Activated CD4-positive, alpha-beta T cell treated with anti-CD3 and anti-CD28 coated beads, Interleukin-2, amount 10 ng/mL, durations not matched to agents 24 days and 14 days (primary cell): ENCODE measurements at regions of chr3 and their contacts with region 1.

Region 1: DNA sequence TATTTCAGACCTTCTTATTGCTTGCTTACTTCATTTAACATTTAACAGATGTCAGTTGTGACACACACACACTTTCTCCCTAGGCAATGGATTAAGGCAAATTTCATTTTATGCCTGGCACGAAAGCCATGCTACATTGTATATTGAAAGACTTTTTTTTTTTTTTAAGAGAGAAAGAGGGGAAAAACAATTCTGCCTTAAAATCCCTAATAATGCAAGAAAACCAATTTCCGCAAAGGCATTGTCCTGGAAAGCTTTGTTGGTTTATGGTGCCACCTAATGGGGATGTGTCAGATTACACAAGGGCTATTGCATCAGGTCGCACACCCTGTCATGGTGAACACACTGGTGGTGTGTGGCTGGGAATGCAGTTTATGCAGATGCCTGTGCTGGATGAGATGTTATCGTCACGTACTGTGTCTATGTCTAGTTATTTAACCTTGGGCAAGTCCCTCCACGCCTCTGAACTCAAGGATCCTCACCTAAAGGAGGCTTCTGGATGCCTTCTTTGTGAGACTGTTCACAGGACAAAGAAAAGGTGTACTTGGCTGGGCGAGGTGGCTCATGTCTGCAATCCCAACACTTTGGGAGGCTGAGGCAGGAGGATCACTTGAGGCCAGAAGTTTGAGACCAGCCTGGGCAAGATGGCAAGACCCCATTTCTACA is 37.3 kb upstream of the RFTN1 start:
- DNase-seq: peak; percentile 94
- H3K4me3 Mint-ChIP-seq: no peak overlapping the region
- H3K27ac Mint-ChIP-seq: peak overlapping the region; percentile 71
- H3K4me1 Mint-ChIP-seq: peaks cover 11% of the 10 kb centered on the region
- H3K27me3 Mint-ChIP-seq: peaks cover 13% of the 10 kb centered on the region

Region 2: GRCh38 chr3:15309662-15310335 is 1241.0 kb before region 1 on chr3:
- intact Hi-C with region 1: no loop called
- DNase-seq: no peak
- H3K4me3 Mint-ChIP-seq: peak overlapping the region; percentile 72
- H3K27ac Mint-ChIP-seq: peak overlapping the region; percentile 94
- H3K4me1 Mint-ChIP-seq: peaks cover 54% of the 10 kb centered on the region
- H3K27me3 Mint-ChIP-seq: no peaks in the 10 kb centered on the region

Region 3: GRCh38 chr3:15815696-15816095 is 735.1 kb before region 1 on chr3:
- intact Hi-C with region 1: loop called (anchors 2 kb)
- DNase-seq: no peak
- H3K4me3 Mint-ChIP-seq: no peak overlapping the region
- H3K27ac Mint-ChIP-seq: no peak overlapping the region
- H3K4me1 Mint-ChIP-seq: peaks cover 23% of the 10 kb centered on the region
- H3K27me3 Mint-ChIP-seq: no peaks in the 10 kb centered on the region

Region 4: GRCh38 chr3:16048435-16049318 is 502.1 kb before region 1 on chr3:
- intact Hi-C with region 1: loop called (anchors 1 kb)
- DNase-seq: peak; percentile 83
- H3K4me3 Mint-ChIP-seq: peak overlapping the region; percentile 17
- H3K27ac Mint-ChIP-seq: no peak overlapping the region
- H3K4me1 Mint-ChIP-seq: peaks cover 4% of the 10 kb centered on the region
- H3K27me3 Mint-ChIP-seq: peaks cover 4% of the 10 kb centered on the region

Region 5: DNA sequence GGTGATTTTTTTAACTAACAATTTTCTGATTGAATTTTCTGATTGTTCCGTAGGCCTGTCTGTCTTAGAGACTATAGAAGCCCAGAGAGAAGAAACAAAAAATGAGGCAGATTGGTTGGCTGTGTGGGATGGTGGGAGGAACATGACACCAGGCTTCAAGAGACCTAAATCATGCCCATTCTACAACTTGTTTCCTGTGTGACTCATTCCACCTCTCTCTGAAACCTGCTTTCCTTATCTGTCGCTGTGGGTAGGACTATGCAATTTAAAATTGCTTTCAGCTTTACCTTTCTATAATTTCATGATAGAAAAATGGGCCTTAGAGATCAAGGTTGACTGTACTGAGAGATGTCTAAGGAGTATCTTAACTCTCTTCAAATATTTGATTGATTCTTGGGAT is 241.3 kb before region 1 on chr3:
- intact Hi-C with region 1: loop called (anchors 2 kb)
- DNase-seq: peak; percentile 87
- H3K4me3 Mint-ChIP-seq: peak overlapping the region; percentile 61
- H3K27ac Mint-ChIP-seq: peak overlapping the region; percentile 89
- H3K4me1 Mint-ChIP-seq: peaks cover 80% of the 10 kb centered on the region
- H3K27me3 Mint-ChIP-seq: no peaks in the 10 kb centered on the region

Region 6: GRCh38 chr3:16319307-16319706 is 231.5 kb before region 1 on chr3:
- intact Hi-C with region 1: loop called (anchors 1 kb)
- DNase-seq: peak; percentile 94
- H3K4me3 Mint-ChIP-seq: peak overlapping the region; percentile 35
- H3K27ac Mint-ChIP-seq: peak overlapping the region; percentile 80
- H3K4me1 Mint-ChIP-seq: peaks cover 61% of the 10 kb centered on the region
- H3K27me3 Mint-ChIP-seq: no peaks in the 10 kb centered on the region

Region 7: DNA sequence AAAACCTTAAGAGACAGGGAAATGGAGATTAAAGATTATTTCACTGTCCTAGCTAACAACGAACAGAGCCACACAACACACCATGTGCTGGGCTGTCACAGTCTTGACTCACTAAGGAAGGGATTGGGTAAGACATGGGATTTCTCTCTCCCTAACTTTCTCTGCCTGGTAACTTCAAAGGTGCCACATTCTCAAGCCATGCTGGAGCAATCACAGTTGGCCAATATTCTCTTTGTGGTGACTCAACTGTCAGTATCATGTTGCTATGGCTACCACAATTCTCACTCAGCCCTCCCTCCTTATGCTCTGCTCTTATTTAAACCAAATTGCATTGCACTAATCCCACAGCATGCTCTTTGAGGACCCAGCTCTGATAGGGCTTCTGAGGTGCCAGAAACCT is 211.8 kb before region 1 on chr3:
- intact Hi-C with region 1: loop called (anchors 5 kb)
- DNase-seq: peak; percentile 71
- H3K4me3 Mint-ChIP-seq: no peak overlapping the region
- H3K27ac Mint-ChIP-seq: peak overlapping the region; percentile 1
- H3K4me1 Mint-ChIP-seq: peaks cover 45% of the 10 kb centered on the region
- H3K27me3 Mint-ChIP-seq: no peaks in the 10 kb centered on the region